ENCODE measurements at regions of chr12 and their contacts with region 1.

Region 1: GRCh38 chr12:99386907-99387306 is 260.6 kb upstream of the GARIN6 start:
- DNase-seq: peak; percentile 48
- ATAC-seq: peak; percentile 83
- H3K4me3 ChIP-seq: no peak overlapping the region
- H3K27ac ChIP-seq: no peak overlapping the region
- H3K4me1 ChIP-seq: no peaks in the 10 kb centered on the region
- H3K27me3 ChIP-seq: no peaks in the 10 kb centered on the region
- CTCF ChIP-seq: peak; percentile 65
- EP300 ChIP-seq: no peak
- POLR2A ChIP-seq: no peak
- RAD21 ChIP-seq: no peak

Region 2: DNA sequence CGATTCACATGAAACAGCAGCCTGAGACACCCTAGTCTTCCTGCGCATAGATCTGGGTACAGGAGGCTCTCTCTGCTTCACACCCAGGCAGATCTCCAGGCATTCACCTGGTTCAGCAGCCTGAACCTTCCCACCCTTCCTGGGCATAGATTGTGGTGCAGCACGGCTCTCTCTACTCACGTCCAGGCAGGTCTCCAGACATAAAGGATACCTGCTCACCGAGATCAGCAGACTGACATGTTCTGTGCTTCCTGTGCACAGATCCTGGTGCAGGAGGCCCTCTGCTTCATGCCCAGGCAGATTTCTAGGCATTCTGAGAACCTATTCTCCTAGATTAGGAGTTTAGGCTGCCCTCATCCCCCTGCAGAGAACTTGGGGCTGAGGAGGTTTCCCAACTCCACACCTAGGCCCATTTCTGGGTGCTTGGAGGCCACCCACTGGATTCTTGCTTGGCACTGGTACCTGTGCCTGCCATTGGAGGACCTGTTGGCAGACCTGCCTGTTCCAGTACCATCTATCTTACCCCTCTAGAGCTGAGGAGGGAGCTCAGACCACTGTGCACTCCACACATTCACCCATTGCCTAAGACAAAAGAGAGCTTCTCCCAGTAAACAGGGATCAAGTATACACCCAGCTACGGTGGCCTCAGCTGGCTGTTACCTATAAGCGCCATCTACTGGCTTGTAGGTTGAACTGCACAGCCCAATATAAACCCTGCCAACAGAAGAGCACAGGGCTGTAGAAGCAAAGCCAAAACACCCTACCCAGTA is 232.7 kb after region 1 on chr12:
- CTCF ChIA-PET with region 1: interaction called, 3 read pairs
- POLR2A ChIA-PET with region 1: no interaction called
- in situ Hi-C with region 1: no loop called
- intact Hi-C with region 1: loop called (anchors 10 kb)
- DNase-seq: peak; percentile 14
- ATAC-seq: peak; percentile 75
- H3K4me3 ChIP-seq: no peak overlapping the region
- H3K27ac ChIP-seq: no peak overlapping the region
- H3K4me1 ChIP-seq: no peaks in the 10 kb centered on the region
- H3K27me3 ChIP-seq: no peaks in the 10 kb centered on the region
- CTCF ChIP-seq: peak; percentile 68
- EP300 ChIP-seq: no peak
- POLR2A ChIP-seq: no peak
- RAD21 ChIP-seq: no peak

Region 3: GRCh38 chr12:99658671-99659349 is 271.9 kb after region 1 on chr12:
- CTCF ChIA-PET with region 1: no interaction called
- POLR2A ChIA-PET with region 1: no interaction called
- in situ Hi-C with region 1: no loop called
- intact Hi-C with region 1: loop called (anchors 1 kb)
- DNase-seq: no peak
- ATAC-seq: no peak
- H3K4me3 ChIP-seq: no peak overlapping the region
- H3K27ac ChIP-seq: no peak overlapping the region
- H3K4me1 ChIP-seq: no peaks in the 10 kb centered on the region
- H3K27me3 ChIP-seq: no peaks in the 10 kb centered on the region; a peak in 1 of 5 replicates
- CTCF ChIP-seq: 0 out of 2 replicates have a peak, but pooled peaks have one; percentile 9
- EP300 ChIP-seq: no peak
- POLR2A ChIP-seq: no peak
- RAD21 ChIP-seq: no peak

Region 4: DNA sequence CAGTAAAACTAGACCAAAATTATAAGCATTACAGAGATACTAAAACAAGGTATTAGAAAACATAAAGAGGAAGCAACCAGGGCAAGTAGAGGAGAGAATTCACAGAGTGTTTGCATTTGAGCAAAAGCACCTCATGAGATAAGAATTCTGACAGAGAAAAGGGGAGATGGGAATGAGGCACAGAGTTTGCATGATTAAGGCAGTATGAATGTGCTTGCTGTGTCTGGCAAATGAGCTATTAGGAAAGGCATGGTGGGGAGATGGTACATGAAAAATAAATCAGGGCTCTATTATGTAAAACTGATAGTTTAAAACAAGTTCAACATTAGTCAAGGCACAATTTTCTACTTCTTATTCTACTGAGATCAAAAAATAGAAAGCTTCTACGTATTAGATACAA is 283.7 kb after region 1 on chr12:
- CTCF ChIA-PET with region 1: no interaction called
- POLR2A ChIA-PET with region 1: no interaction called
- in situ Hi-C with region 1: no loop called
- intact Hi-C with region 1: no loop called
- DNase-seq: no peak
- ATAC-seq: no peak
- H3K4me3 ChIP-seq: no peak overlapping the region
- H3K27ac ChIP-seq: no peak overlapping the region
- H3K4me1 ChIP-seq: no peaks in the 10 kb centered on the region
- H3K27me3 ChIP-seq: no peaks in the 10 kb centered on the region
- CTCF ChIP-seq: no peak
- EP300 ChIP-seq: no peak
- POLR2A ChIP-seq: no peak
- RAD21 ChIP-seq: no peak

Region 5: GRCh38 chr12:99767809-99768208 is 380.9 kb after region 1 on chr12:
- CTCF ChIA-PET with region 1: no interaction called
- POLR2A ChIA-PET with region 1: no interaction called
- in situ Hi-C with region 1: loop called (anchors 10 kb)
- intact Hi-C with region 1: no loop called
- DNase-seq: no peak
- ATAC-seq: no peak
- H3K4me3 ChIP-seq: no peak overlapping the region
- H3K27ac ChIP-seq: no peak overlapping the region
- H3K4me1 ChIP-seq: no peaks in the 10 kb centered on the region
- H3K27me3 ChIP-seq: no peaks in the 10 kb centered on the region
- CTCF ChIP-seq: peak; percentile 40
- EP300 ChIP-seq: no peak
- POLR2A ChIP-seq: no peak
- RAD21 ChIP-seq: no peak

Measured in HepG2 (cell line).